CD14-positive monocyte (primary cell): ENCODE measurements at regions of chr11 and their contacts with region 1.

Region 1: DNA sequence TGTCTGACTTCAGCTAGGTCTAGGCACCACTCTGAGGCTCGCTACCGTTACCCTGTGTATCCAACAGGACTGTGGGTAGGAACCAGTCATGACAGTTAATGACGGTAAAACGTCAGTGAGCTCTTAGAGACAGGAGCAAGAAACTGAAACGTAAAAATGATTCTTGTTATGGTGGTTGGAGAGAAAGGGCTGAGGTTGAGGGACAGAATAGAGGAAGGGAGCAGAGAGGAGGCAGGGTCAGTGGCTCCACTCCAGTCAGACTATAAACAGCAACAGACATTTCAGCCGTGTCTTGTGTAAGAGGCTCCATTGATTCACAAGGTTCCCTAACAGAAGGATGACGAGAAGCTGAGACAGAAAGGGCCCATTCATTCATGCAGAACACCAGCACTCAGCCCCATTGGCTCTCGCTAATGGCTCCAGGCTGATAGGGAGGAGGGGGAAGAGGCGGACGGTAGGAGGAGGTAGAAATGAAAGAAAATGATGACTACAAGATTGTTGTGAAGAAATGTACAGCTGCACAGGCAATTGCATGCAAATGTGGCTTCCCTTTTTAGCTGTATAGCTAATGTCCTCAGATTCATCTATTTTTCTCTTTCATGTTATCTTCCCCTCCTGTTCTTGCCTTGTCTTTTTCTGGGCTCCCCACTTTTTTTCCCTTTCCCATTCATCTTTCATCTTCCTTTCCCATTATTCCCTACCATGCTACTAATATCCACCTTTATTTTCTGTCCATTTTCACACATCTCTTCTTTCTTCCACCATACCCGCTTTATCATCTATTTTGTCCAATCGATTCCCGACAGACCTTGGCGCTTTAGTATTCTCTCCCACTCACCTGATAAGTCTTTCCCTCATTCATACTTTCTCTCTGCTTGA is 34.3 kb downstream of the ETS1 start:
- DNase-seq: peak; percentile 93 to 95 (median 95)
- H3K4me3 ChIP-seq: peak overlapping the region in 1 of 3 experiments; percentile 29
- H3K4me3 Mint-ChIP-seq: peak overlapping the region; percentile 61 to 91
- H3K27ac ChIP-seq: peak overlapping the region; percentile 35 to 76
- H3K27ac Mint-ChIP-seq: peak overlapping the region; percentile 81 to 95 (median 93)
- H3K4me1 ChIP-seq: peaks cover 41 to 50% of the 10 kb centered on the region in 2 donors
- H3K4me1 Mint-ChIP-seq: peaks cover 61% of the 10 kb centered on the region
- H3K27me3 ChIP-seq: peaks cover 3 to 14% of the 10 kb centered on the region in 2 donors
- H3K27me3 Mint-ChIP-seq: peaks cover under 1 to 21% (median 21%) of the 10 kb centered on the region in 3 donors
- CTCF ChIP-seq: no peak

Region 2: DNA sequence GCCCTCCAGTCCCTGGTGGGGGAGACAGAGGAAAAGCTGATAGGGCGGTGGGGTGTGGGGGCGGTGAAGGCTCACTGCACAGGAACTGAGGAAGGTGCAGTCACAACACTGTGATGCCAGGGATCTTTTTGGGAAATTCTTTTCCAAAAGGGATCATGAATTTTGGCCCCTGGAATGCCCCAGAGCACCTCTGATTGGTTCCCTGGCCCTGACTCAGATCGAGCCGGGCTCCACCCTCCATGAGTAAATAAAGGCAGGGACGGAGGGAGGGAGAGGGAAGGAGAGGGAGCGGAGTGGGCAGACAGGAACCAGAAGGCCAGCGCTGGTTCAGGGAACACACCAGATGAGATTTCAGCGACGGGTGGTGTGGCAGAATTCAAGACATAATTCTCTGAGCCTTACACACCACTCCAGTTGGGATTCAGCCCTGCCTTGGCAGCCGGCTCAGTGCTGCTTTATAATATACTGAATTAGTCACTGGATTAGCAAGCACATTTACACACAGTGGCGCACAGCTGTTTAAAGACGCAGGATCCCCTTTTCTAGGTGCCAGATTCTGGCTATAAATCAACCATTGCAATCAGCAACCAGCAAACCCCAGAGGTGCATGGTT is 45.9 kb before region 1 on chr11:
- intact Hi-C with region 1: no loop called
- DNase-seq: peak in 1 of 3 donors; percentile 15
- H3K4me3 ChIP-seq: no peak overlapping the region
- H3K4me3 Mint-ChIP-seq: peak overlapping the region; percentile 41 to 66
- H3K27ac ChIP-seq: no peak overlapping the region
- H3K27ac Mint-ChIP-seq: peak overlapping the region in 2 of 7 donors; percentile 60 to 64
- H3K4me1 ChIP-seq: peaks cover 6 to 7% of the 10 kb centered on the region in 2 donors
- H3K4me1 Mint-ChIP-seq: peaks cover 24% of the 10 kb centered on the region
- H3K27me3 ChIP-seq: peaks cover 4 to 9% of the 10 kb centered on the region in 2 donors
- H3K27me3 Mint-ChIP-seq: peaks cover 13 to 21% (median 20%) of the 10 kb centered on the region in 3 donors
- CTCF ChIP-seq: no peak

Region 3: DNA sequence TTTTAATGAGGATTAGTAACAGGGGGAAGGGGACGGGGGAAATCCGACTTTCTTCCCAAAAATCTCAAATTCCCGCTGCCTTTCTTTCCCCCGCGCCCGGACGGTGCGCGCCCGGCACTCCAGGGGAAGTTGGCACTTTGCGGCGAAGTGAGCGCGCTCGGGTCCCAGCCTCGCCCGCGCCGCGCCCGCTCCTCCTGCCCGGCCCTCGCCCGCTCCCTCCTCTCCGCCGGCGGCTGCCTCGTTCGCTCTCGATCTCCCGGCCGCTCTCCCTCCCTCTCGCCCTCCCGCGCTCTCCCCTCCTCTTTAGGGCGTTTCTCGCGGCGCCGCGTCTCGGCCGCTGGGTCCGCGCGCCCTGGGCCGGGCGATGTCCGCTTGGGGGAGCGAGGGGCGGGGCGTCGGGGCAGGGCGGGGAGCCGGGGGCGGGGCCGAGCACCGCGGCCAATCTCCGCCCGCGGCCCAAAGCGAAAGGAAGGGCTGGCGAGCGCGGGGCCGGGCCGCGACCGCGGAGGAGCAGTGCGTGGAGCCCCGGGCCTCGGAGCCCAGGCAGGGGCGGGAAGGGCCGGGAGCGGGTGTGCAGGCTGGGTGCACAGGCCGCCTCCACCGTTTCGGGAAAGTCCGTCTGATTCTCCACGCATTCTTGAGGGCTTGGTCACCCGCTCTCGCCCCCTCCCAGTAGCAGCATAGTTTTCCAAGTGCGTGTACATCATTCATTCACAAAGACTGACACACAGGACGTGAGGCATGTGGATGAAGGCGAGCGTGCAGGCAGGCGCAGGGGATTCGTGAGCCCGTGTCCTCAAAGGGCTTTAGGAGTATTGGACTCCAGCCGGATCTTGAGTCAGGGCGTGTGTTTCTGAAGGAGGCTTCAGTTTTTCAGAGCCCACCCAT is 30.7 kb before region 1 on chr11:
- intact Hi-C with region 1: loop called in 1 of 2 experiments (anchors 2 kb)
- DNase-seq: peak; percentile 75 to 82 (median 80)
- H3K4me3 ChIP-seq: peak overlapping the region; percentile 62 to 96 (median 81)
- H3K4me3 Mint-ChIP-seq: peak overlapping the region; percentile 88 to 91
- H3K27ac ChIP-seq: peak overlapping the region; percentile 62 to 91
- H3K27ac Mint-ChIP-seq: peak overlapping the region; percentile 60 to 92 (median 85)
- H3K4me1 ChIP-seq: peaks cover 13 to 18% of the 10 kb centered on the region in 2 donors
- H3K4me1 Mint-ChIP-seq: peaks cover 33% of the 10 kb centered on the region
- H3K27me3 ChIP-seq: peaks cover 0 to 12% of the 10 kb centered on the region in 2 donors
- H3K27me3 Mint-ChIP-seq: peaks cover 13 to 21% (median 15%) of the 10 kb centered on the region in 3 donors
- CTCF ChIP-seq: no peak

Region 4: DNA sequence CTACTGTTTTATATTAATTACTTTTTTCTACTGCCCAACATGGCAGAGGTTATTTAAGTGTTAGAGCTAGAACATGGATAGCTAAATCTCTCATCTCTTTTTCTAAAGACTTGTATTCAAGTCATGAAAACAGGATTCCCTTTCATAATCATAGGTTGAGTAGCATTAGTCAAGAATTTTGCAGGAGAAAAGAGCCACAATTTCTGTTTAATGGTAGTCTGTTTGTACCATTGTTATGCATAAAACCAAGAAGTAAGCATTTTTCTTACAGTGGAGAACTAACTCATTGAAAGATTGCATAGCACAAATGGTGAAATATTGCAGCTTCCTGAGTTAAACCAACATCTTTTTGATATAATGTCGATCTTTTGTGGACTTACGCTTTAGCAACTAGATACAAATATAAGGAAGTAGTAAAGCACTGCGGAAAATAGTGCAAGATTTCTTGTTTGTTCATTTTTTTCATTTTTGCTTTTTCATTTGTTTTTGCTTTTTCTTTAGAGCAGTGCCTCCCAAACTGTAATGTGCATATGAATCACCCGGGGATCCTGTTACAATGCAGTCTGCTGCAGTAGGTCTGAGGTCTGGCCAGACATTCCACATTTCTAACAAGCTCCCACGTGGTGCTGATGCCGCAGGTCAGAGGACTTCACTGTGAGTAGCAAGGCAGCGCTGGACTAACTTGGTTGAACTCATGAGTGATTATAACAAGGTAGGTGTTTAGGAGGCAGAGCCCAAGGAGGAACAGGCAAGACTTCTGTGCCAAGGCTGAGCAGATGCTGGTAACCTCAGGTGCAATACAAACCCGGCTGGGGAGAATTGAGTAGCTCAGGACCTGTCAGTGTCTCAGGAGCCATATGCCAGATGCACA is 29.7 kb after region 1 on chr11:
- intact Hi-C with region 1: loop called in 1 of 2 experiments (anchors 5 kb)
- DNase-seq: peak; percentile 44 to 75 (median 54)
- H3K4me3 ChIP-seq: peak overlapping the region in 1 of 3 experiments; percentile 22
- H3K4me3 Mint-ChIP-seq: peak overlapping the region; percentile 28 to 86
- H3K27ac ChIP-seq: peak overlapping the region; percentile 12 to 63
- H3K27ac Mint-ChIP-seq: peak overlapping the region; percentile 75 to 94 (median 86)
- H3K4me1 ChIP-seq: peaks cover 38 to 53% of the 10 kb centered on the region in 2 donors
- H3K4me1 Mint-ChIP-seq: peaks cover 53% of the 10 kb centered on the region
- H3K27me3 ChIP-seq: no peaks in the 10 kb centered on the region
- H3K27me3 Mint-ChIP-seq: peaks cover 0 to 4% (median 0%) of the 10 kb centered on the region in 3 donors
- CTCF ChIP-seq: no peak

Region 5: GRCh38 chr11:128669506-128670270 is 116.7 kb after region 1 on chr11:
- intact Hi-C with region 1: no loop called
- DNase-seq: peak in 1 of 3 donors; percentile 52
- H3K4me3 ChIP-seq: no peak overlapping the region
- H3K4me3 Mint-ChIP-seq: no peak overlapping the region
- H3K27ac ChIP-seq: no peak overlapping the region
- H3K27ac Mint-ChIP-seq: peak overlapping the region in 1 of 7 donors; percentile 42
- H3K4me1 ChIP-seq: peaks cover 7 to 15% of the 10 kb centered on the region in 2 donors
- H3K4me1 Mint-ChIP-seq: peaks cover 34% of the 10 kb centered on the region
- H3K27me3 ChIP-seq: no peaks in the 10 kb centered on the region
- H3K27me3 Mint-ChIP-seq: peaks cover 0 to 2% (median 0%) of the 10 kb centered on the region in 3 donors
- CTCF ChIP-seq: no peak